ENCODE measurements at regions of chr13 and their contacts with region 1.

Region 1: DNA sequence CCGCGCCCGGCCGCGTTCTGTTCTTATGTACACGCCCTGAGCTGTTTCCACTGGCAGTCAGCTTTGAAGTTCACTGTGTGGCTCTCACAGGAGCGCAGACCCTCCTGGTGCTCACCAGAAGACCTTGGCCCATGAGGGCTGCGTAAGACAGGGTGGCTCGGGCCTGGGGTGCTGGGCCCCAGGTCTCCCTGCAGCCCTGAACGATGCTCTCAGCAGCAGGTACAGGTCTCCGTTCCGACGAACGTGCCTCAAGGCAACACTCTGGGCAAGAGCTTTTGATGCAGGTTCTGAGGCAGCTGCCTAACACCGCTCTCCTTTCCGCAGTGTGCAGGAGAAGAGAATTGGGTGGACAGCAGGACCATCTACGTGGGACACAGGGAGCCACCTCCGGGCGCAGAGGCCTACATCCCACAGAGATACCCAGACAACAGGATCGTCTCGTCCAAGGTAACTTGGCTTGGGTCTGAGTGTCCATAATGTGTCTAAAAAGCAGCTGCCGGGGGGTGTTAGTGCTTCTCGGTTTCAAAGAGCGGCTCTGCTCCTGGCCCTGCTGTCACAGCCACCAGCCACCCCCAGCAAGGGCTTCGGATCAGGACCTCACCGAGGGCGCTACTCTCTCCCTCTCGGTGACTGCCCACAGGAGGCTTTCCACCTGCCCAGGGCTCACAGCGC is 95.1 kb downstream of the ATP11A start:
- DNase-seq: no peak
- H3K4me3 ChIP-seq: no peak overlapping the region
- H3K27ac ChIP-seq: no peak overlapping the region
- H3K4me1 ChIP-seq: no peaks in the 10 kb centered on the region
- H3K27me3 ChIP-seq: no peaks in the 10 kb centered on the region
- CTCF ChIP-seq: no peak

Region 2: DNA sequence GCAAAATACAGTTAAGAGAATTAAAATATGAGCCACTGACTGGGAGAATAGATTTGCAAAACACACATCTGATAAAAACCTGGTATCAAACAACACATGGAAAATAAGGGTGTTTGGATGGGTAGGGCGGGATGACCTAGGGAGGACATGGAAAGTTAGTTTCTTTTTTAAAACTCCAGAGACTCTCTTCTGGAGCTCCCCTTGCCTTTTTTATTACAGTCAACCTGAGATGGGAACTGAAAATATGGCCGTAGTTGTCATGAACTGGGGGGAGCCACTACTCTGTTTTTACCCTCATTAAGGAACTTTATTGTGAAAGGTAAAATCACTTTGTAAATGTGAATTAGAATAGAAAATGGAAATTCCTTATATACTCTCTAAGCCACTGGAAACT is 17.9 kb after region 1 on chr13:
- intact Hi-C with region 1: loop called (anchors 1 kb)
- DNase-seq: no peak
- H3K4me3 ChIP-seq: no peak overlapping the region
- H3K27ac ChIP-seq: no peak overlapping the region
- H3K4me1 ChIP-seq: no peaks in the 10 kb centered on the region
- H3K27me3 ChIP-seq: no peaks in the 10 kb centered on the region
- CTCF ChIP-seq: no peak